ENCODE measurements at regions of chr10 and their contacts with region 1.

Region 1: GRCh38 chr10:95363303-95363912 is 72.6 kb upstream of the PDLIM1 start:
- DNase-seq: peak; percentile 28
- H3K4me3 Mint-ChIP-seq: no peak overlapping the region
- H3K27ac Mint-ChIP-seq: no peak overlapping the region
- H3K4me1 Mint-ChIP-seq: no peaks in the 10 kb centered on the region
- H3K27me3 Mint-ChIP-seq: peaks cover 6% of the 10 kb centered on the region

Region 2: GRCh38 chr10:95133016-95133752 is 230.2 kb before region 1 on chr10:
- CTCF ChIA-PET with region 1: interaction called, 30 read pairs
- POLR2A ChIA-PET with region 1: interaction called, 3 read pairs
- intact Hi-C with region 1: loop called (anchors 1 kb)
- DNase-seq: peak; percentile 81
- H3K4me3 Mint-ChIP-seq: no peak overlapping the region
- H3K27ac Mint-ChIP-seq: no peak overlapping the region
- H3K4me1 Mint-ChIP-seq: no peaks in the 10 kb centered on the region
- H3K27me3 Mint-ChIP-seq: peaks cover 1% of the 10 kb centered on the region

Region 3: DNA sequence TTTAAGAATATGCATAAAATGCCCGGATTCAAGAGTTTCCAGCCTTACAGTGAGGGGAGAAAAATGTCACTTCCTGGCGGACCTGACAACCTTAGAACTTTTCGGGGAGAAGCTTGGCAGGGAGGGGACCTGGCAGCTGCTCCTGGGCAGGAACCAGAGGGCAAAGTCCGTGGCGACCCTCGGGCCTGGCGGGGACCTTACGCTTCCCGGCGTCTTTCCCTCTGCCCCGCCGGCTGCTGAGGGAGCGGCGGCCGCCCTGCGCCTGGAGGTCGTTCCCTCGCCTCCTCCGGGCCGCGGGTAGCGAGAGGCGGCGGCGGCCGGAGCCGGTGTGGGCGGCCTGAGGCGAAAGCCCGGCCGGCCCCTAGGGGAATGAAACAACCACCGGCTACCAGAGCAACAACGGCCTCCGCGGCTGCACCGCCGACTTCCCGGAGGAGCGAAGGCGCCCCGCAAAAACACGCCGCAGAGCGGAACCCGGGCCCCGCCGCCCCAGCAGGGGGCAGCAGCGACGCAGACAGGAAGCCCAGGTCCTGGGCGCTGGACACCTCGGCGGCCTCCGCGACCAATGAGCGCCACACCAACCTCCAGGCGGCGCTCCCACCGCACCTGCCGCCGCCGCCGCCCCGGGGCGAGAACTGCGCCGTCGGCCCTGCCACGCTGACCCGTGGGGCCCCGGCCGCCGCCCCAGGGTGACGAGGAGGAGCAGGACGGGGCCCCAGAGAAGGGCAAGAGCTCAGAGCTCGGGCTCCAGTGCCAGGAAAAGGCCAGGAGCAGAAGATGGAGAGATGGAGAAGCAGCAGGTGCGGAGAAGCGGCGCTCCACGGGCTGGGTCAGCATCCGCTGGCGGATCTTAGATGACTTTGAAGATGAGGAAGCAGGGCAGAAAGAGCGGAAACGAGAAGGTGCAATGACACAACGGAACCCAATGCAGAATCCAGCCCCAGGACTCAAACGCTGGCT is 179.9 kb before region 1 on chr10:
- CTCF ChIA-PET with region 1: interaction called, 10 read pairs
- POLR2A ChIA-PET with region 1: no interaction called
- intact Hi-C with region 1: loop called (anchors 1 kb)
- DNase-seq: peak; percentile 82
- H3K4me3 Mint-ChIP-seq: peak overlapping the region; percentile 63
- H3K27ac Mint-ChIP-seq: no peak overlapping the region
- H3K4me1 Mint-ChIP-seq: peaks cover 6% of the 10 kb centered on the region
- H3K27me3 Mint-ChIP-seq: peaks cover 25% of the 10 kb centered on the region

Region 4: DNA sequence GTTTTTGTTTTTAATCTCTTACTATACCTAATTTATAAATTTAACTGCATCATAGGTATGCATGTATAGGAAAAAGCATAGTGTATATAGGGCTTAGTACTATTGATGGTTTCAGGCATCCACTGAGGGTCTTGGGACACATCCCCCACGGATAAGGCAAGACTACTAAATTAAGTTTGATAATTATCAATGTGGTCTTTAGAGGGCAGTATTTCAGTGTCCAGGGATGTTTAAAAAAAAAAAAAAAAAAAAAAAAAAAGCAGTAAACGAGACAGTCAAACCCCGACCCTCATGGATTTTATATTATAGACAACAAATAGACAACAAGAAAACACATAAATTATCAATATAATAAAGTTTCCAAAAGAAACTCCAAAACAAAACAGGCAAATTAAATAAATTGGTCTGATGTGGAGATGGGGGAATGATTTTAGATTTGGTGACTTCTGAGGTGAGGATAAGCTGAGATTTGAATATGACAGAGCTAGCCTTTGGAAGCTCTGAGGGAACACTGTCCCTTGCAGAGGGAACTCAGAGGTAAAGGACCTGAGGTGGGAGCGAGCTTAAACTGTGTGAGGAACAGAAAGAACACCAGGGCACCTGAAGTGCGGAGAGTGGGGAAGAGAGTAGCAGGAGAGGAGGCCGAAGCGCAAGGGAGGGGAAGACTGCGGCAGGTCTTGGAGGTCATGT is 154.6 kb before region 1 on chr10:
- CTCF ChIA-PET with region 1: no interaction called
- POLR2A ChIA-PET with region 1: no interaction called
- intact Hi-C with region 1: loop called (anchors 1 kb)
- DNase-seq: no peak
- H3K4me3 Mint-ChIP-seq: no peak overlapping the region
- H3K27ac Mint-ChIP-seq: no peak overlapping the region
- H3K4me1 Mint-ChIP-seq: no peaks in the 10 kb centered on the region
- H3K27me3 Mint-ChIP-seq: peaks cover 8% of the 10 kb centered on the region

Region 5: GRCh38 chr10:95350219-95350829 is 13.1 kb before region 1 on chr10:
- CTCF ChIA-PET with region 1: interaction called, 18 read pairs
- POLR2A ChIA-PET with region 1: no interaction called
- intact Hi-C with region 1: no loop called
- DNase-seq: no peak
- H3K4me3 Mint-ChIP-seq: no peak overlapping the region
- H3K27ac Mint-ChIP-seq: no peak overlapping the region
- H3K4me1 Mint-ChIP-seq: no peaks in the 10 kb centered on the region
- H3K27me3 Mint-ChIP-seq: no peaks in the 10 kb centered on the region

Region 6: GRCh38 chr10:95374597-95375209 is 11.3 kb after region 1 on chr10:
- CTCF ChIA-PET with region 1: interaction called, 87 read pairs
- POLR2A ChIA-PET with region 1: interaction called, 3 read pairs
- intact Hi-C with region 1: no loop called
- DNase-seq: peak; percentile 81
- H3K4me3 Mint-ChIP-seq: no peak overlapping the region
- H3K27ac Mint-ChIP-seq: no peak overlapping the region
- H3K4me1 Mint-ChIP-seq: peaks cover 9% of the 10 kb centered on the region
- H3K27me3 Mint-ChIP-seq: peaks cover 14% of the 10 kb centered on the region

Region 7: GRCh38 chr10:95391581-95392216 is 28.3 kb after region 1 on chr10:
- CTCF ChIA-PET with region 1: interaction called, 10 read pairs
- POLR2A ChIA-PET with region 1: no interaction called
- intact Hi-C with region 1: no loop called
- DNase-seq: peak; percentile 24
- H3K4me3 Mint-ChIP-seq: no peak overlapping the region
- H3K27ac Mint-ChIP-seq: no peak overlapping the region
- H3K4me1 Mint-ChIP-seq: peaks cover 11% of the 10 kb centered on the region
- H3K27me3 Mint-ChIP-seq: no peaks in the 10 kb centered on the region